Colonic mucosa (tissue), 4 donors: ENCODE measurements at regions of chr2 and their contacts with region 1.

Region 1: GRCh38 chr2:98020992-98021713 is 25.4 kb upstream of the TMEM131 start:
- DNase-seq: peak; percentile 68
- H3K4me3 ChIP-seq: no peak overlapping the region
- H3K27ac ChIP-seq: peak overlapping the region; percentile 69
- H3K4me1 ChIP-seq: no peaks in the 10 kb centered on the region
- H3K27me3 ChIP-seq: no peaks in the 10 kb centered on the region
- CTCF ChIP-seq: no peak

Region 2: DNA sequence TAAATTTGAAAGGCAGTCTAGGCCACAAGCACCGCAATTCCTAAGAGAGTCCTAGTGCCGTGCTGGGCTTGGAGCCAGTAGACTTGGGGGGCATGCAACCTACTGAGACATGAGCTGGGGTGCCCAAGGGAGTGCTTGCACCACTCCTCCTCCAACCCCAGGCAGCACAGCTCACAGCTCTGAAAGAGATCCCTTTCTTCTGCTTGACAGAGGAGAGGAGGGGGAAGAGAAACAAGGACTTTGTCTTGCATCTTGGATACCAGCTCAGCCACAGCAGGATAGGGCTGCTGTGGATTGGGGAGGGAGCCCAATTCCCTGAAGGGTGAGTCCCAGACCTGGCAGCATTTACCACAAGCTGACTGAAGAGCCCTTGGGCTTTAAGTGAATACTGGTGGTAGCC is 160.0 kb before region 1 on chr2:
- intact Hi-C with region 1: no loop called
- DNase-seq: no peak
- H3K4me3 ChIP-seq: no peak overlapping the region
- H3K27ac ChIP-seq: no peak overlapping the region
- H3K4me1 ChIP-seq: no peaks in the 10 kb centered on the region
- H3K27me3 ChIP-seq: no peaks in the 10 kb centered on the region
- CTCF ChIP-seq: no peak

Region 3: DNA sequence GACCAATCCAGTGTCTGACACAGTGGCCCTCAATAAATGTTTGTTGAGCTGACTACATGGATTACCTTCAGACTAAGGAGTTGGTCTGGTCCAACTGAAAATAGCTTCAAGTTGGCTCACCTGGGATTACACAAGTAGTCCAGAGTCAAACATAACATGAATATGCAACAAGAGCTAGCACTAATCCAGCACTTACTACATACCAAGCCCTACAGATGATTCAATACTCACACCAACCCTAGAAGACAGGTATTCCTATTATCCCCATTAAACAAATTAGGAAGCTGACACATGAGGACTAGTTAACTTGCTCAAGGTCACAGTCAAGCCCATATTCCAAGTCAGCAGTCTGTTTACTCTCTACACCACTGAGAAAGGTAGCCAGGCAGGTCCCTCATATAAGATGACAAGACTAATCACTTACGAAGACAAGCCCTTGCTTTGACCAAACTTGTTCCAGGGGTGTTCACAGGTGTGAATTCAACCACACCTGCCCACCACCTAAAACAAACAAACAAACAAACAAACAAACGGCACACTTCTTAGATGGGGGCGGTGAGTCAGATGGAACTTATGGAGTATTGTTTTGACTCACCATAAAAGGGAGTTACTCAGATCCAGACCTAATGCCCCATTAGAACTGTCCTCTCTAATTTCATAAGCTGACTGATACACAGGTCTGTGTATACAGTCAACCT is 54.5 kb before region 1 on chr2:
- intact Hi-C with region 1: loop called (anchors 2 kb)
- DNase-seq: peak; percentile 31
- H3K4me3 ChIP-seq: no peak overlapping the region
- H3K27ac ChIP-seq: peak overlapping the region; percentile 35
- H3K4me1 ChIP-seq: peaks cover 10% of the 10 kb centered on the region
- H3K27me3 ChIP-seq: no peaks in the 10 kb centered on the region
- CTCF ChIP-seq: no peak